ENCODE measurements at regions of chr19 and their contacts with region 1.

Region 1: DNA sequence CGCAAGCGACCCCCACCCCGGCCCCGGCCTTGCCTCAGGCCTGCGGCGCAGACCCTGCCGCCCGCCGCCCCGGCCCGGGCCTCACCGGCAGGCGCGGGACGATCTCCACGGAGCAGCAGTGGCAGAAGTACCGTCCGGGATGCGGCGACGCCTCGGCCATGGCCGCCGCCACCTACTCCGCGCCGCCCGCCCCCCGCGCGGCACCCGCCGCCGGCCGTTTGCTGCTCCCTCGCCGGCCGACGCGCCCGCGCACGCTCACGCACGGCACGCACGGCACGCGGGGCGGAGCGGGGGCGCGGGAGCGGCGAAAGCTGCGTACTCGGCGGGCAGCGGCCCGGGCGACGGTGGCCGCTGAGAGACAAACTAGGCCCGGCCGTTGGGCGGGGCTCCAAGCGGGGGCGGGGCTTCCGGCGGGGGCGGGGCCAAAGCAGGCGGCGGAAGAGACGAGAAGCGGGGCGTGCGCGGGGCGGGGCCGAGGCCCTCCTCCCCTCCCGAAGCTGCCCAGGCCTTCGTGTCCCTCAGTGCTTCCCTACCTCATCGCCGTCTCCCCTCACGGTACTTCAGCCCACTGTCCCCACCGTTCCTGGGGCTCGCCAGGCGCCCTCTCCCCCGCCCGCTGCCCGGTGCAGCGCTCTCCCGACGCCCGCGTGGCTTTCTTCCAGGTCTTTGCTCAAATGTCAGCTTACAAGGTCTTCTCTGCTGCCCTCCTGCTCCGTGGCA is at the start of gene RNF126:
- DNase-seq: peak; percentile 82 to 98 (median 95)
- ATAC-seq: peak; percentile 82 to 86 (median 84)
- H3K4me3 ChIP-seq: peak within 1 kb of the TSS; percentile 80 to 100 (median 98)
- H3K27ac ChIP-seq: peak within 1 kb of the TSS; percentile 79 to 93 (median 84)
- H3K4me1 ChIP-seq: peaks cover 0 to 22% (median 8%) of the 10 kb centered on the region in 3 donors
- H3K27me3 ChIP-seq: no peaks in the 10 kb centered on the region
- CTCF ChIP-seq: no peak
- total RNA-seq, gene RNF126: 11.9 to 21.5 (median 16.5) TPM

Region 2: DNA sequence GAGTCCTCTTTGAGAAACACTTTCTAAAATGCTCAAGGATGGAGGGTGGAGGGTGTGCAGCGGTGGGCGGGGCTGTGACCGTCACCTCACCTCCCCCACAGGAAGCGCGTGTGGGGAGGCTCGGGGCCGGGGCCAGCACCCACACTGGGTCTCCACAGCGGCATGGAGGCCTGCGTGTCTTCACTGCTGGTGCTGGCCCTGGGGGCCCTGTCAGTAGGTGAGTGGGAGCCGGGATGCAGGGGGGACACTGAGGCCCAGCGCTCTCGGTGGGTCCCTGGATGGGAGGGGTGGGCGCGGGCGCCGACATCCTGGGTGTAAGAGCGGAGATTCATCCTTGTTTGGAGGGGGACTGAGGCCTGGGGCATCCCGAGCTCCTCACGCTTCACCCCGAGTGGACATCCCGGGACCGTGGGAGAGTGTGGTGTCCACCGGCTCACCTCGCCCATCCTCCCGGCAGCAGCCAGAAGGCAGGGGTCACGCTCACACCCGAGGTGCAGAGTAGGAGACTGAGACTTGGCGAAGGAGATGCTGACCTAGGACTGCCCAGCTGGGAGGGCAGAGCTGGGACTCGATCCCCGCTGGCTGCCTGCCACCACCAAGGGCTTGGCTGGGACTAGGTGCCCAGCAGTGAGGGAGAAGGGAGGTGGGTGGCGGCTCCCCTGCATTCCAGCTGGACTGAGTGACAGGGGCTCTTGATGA is 119.1 kb before region 1 on chr19 and contains the start of gene GZMM:
- intact Hi-C with region 1: no loop called
- DNase-seq: peak in 2 of 6 donors; percentile 30 to 73
- ATAC-seq: peak in 3 of 4 donors; percentile 24 to 49 (median 41)
- H3K4me3 ChIP-seq: no peak within 1 kb of the TSS
- H3K27ac ChIP-seq: no peak within 1 kb of the TSS
- H3K4me1 ChIP-seq: no peaks in the 10 kb centered on the region
- H3K27me3 ChIP-seq: no peaks in the 10 kb centered on the region
- CTCF ChIP-seq: no peak
- total RNA-seq, gene GZMM: 0.28 to 0.38 (median 0.33) TPM in 4 of 6 donors, not detected in the others

Region 3: DNA sequence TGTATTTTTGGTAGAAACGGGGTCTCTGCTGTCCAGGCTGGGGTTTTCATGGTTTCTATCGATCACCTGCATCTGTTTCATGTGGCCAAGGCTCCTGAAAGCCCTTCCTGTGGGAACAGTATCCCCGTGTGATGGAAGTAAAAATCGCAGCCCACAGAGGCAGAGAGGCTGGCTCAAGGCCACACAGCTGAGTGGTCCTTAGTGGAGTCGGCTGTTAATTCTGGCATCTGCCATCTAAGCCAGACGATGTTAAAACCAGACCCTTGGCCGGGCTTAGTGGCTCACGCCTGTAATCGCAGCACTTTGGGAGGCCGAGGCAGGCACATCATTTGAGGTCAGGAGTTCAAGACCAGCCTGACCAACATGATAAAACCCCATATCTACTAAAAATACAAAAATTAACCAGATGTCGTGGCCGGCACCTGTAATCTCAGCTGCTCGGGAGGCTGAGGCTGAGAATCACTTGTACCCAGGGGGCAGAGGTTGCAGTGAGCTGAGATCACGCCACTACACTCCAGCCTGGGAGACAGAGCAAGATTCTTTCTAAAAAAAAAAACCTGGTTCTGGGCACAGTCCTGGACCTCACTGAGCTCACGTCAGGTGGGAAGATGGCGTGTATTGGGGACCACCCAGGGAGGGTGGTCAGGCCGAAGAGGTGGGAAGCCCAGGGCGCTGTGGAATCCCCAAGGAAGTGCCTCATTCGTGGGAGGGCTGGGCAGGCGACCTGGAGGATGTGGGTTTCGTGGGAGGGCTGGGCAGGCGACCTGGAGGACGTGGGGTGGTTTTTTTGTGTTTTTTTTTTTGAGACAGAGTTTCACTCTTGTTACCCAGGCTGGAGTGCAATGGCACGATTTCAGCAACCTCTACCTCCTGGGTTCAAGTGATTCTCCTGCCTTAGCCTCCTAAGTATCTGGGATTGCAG is 69.3 kb after region 1 on chr19:
- intact Hi-C with region 1: loop called (anchors 2 to 10 kb)
- DNase-seq: no peak
- ATAC-seq: no peak
- H3K4me3 ChIP-seq: no peak overlapping the region
- H3K27ac ChIP-seq: no peak overlapping the region
- H3K4me1 ChIP-seq: no peaks in the 10 kb centered on the region
- H3K27me3 ChIP-seq: no peaks in the 10 kb centered on the region
- CTCF ChIP-seq: no peak

Region 4: GRCh38 chr19:737581-738093 is 74.5 kb after region 1 on chr19:
- intact Hi-C with region 1: loop called (anchors 2 to 10 kb)
- DNase-seq: peak in 2 of 6 donors; percentile 38 to 79
- ATAC-seq: peak; percentile 36 to 73 (median 63)
- H3K4me3 ChIP-seq: no peak overlapping the region
- H3K27ac ChIP-seq: no peak overlapping the region
- H3K4me1 ChIP-seq: no peaks in the 10 kb centered on the region
- H3K27me3 ChIP-seq: no peaks in the 10 kb centered on the region
- CTCF ChIP-seq: peak; percentile 34 to 51 (median 40)

Region 5: GRCh38 chr19:872266-872951 is 209.3 kb after region 1 on chr19:
- intact Hi-C with region 1: no loop called
- DNase-seq: peak in 2 of 6 donors; percentile 58 to 83
- ATAC-seq: peak in 1 of 4 donors; percentile 43
- H3K4me3 ChIP-seq: no peak overlapping the region
- H3K27ac ChIP-seq: no peak overlapping the region
- H3K4me1 ChIP-seq: no peaks in the 10 kb centered on the region
- H3K27me3 ChIP-seq: no peaks in the 10 kb centered on the region
- CTCF ChIP-seq: no peak

Region 6: DNA sequence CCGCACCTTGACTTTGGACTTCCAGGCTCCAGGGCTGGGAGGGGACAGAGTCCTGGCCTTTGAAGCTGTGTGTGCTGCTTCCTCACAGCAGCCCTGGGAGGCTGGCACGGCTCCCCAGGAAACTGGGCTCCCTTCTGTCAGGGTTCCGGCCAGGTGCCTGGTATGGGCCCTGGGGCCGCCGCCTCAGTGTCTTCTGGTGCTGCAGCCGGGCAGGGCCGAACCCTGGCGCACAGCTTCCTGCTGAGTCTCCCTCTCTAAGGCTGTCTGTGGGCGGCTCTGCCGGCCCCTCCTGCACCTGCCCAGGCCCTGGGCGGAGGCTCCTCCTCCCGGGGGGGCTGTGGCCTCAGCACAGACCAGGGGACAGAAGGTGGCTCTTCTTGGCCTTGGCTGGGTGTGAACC is 473.1 kb after region 1 on chr19:
- intact Hi-C with region 1: no loop called
- DNase-seq: peak in 1 of 6 donors; percentile 66
- ATAC-seq: peak in 2 of 4 donors; percentile 17 to 28
- H3K4me3 ChIP-seq: no peak overlapping the region
- H3K27ac ChIP-seq: peak overlapping the region in 2 of 4 donors; percentile 15 to 22
- H3K4me1 ChIP-seq: no peaks in the 10 kb centered on the region
- H3K27me3 ChIP-seq: no peaks in the 10 kb centered on the region
- CTCF ChIP-seq: no peak

Measured in pancreas (tissue), 10 donors.